Naive thymus-derived CD4-positive, alpha-beta T cell (primary cell): ENCODE measurements at regions of chr9 and their contacts with region 1.

Region 1: GRCh38 chr9:74952281-74953151 is at the start of gene C9orf40:
- DNase-seq: peak; percentile 80 to 92 (median 88)
- ATAC-seq: peak; percentile 93
- H3K4me3 ChIP-seq: peak within 1 kb of the TSS; percentile 89
- H3K4me3 Mint-ChIP-seq: peak within 1 kb of the TSS; percentile 87 to 99 (median 97)
- H3K27ac ChIP-seq: peak within 1 kb of the TSS; percentile 86
- H3K27ac Mint-ChIP-seq: peak within 1 kb of the TSS; percentile 89 to 97 (median 95)
- H3K4me1 ChIP-seq: peaks cover 0 to 7% of the 10 kb centered on the region in 2 donors
- H3K4me1 Mint-ChIP-seq: peaks cover 0 to 46% (median 30%) of the 10 kb centered on the region in 7 donors
- H3K27me3 ChIP-seq: no peaks in the 10 kb centered on the region
- H3K27me3 Mint-ChIP-seq: no peaks in the 10 kb centered on the region
- total RNA-seq, gene C9orf40: 1.8 to 13.6 (median 6.6) TPM

Region 2: GRCh38 chr9:73149371-73150067 is 1803.0 kb before region 1 on chr9:
- CTCF ChIA-PET with region 1: no interaction called
- POLR2A ChIA-PET with region 1: no interaction called
- intact Hi-C with region 1: loop called in 1 of 2 experiments (anchors 10 kb)
- DNase-seq: peak in 1 of 9 donors; percentile 57
- ATAC-seq: peak; percentile 49
- H3K4me3 ChIP-seq: peak overlapping the region; percentile 17
- H3K4me3 Mint-ChIP-seq: peak overlapping the region in 9 of 10 donors; percentile 8 to 79 (median 60)
- H3K27ac ChIP-seq: peak overlapping the region; percentile 32
- H3K27ac Mint-ChIP-seq: peak overlapping the region; percentile 71 to 96 (median 78)
- H3K4me1 ChIP-seq: peaks cover 28 to 32% of the 10 kb centered on the region in 2 donors
- H3K4me1 Mint-ChIP-seq: peaks cover 34 to 80% (median 54%) of the 10 kb centered on the region in 7 donors
- H3K27me3 ChIP-seq: no peaks in the 10 kb centered on the region
- H3K27me3 Mint-ChIP-seq: peaks cover 0 to 2% (median 0%) of the 10 kb centered on the region in 5 donors

Region 3: DNA sequence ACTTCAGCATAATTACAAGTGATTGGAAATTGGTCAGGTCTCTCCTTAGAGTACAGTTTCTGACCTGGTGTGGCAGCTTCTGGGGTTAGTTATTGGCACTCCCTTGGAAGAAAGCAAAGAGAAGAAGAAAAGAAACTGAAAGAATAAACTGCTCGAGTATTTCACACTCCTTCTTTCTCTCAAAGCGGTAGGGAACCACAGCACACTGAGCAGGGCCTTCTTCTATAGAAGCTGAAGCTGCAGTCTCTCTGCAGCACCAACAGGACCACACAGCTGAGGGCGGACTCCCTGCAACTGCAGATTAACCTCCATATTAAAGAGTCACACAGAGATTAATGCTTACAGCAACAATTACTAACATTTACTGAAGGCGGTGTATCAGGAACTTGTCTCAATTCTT is 216.8 kb before region 1 on chr9:
- CTCF ChIA-PET with region 1: no interaction called
- POLR2A ChIA-PET with region 1: no interaction called
- intact Hi-C with region 1: no loop called
- DNase-seq: no peak
- ATAC-seq: no peak
- H3K4me3 ChIP-seq: no peak overlapping the region
- H3K4me3 Mint-ChIP-seq: peak overlapping the region in 2 of 10 donors; percentile 41 to 72
- H3K27ac ChIP-seq: no peak overlapping the region
- H3K27ac Mint-ChIP-seq: no peak overlapping the region
- H3K4me1 ChIP-seq: no peaks in the 10 kb centered on the region
- H3K4me1 Mint-ChIP-seq: peaks cover 0 to 10% (median 0%) of the 10 kb centered on the region in 7 donors
- H3K27me3 ChIP-seq: no peaks in the 10 kb centered on the region
- H3K27me3 Mint-ChIP-seq: peaks cover 5 to 24% (median 9%) of the 10 kb centered on the region in 5 donors

Region 4: DNA sequence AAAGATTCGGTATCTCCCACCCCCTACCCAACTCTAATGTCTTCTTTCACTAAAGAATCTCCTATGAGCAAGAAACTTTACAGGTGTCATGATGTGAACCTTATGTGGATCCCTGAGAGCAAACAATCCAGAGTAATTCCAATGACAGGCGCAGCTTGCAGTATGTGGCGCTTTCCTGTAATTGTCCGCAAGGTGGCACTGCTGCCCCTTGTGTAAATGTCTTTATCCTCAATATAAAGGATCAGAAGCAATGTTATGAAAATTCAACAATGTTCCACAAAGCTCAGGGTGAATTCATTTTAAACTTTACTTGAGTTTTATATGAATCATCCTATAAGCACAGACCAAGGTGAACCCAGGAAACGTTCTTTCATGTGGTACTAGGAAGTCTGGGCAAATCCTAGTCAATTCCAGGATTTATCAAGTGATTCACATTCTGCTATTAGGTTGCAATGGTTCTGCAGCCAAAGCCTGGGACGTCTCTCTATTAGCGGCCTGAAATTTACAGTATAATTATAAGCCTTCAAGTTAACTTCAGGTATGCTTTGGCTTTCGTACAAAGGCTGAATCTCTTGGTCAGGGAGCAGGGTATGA is 178.5 kb before region 1 on chr9:
- CTCF ChIA-PET with region 1: interaction called, 4 read pairs
- POLR2A ChIA-PET with region 1: interaction called, 4 read pairs
- intact Hi-C with region 1: loop called (anchors 1 to 2 kb)
- DNase-seq: peak; percentile 26 to 67 (median 56)
- ATAC-seq: peak; percentile 83
- H3K4me3 ChIP-seq: no peak overlapping the region
- H3K4me3 Mint-ChIP-seq: no peak overlapping the region
- H3K27ac ChIP-seq: no peak overlapping the region
- H3K27ac Mint-ChIP-seq: no peak overlapping the region
- H3K4me1 ChIP-seq: no peaks in the 10 kb centered on the region
- H3K4me1 Mint-ChIP-seq: peaks cover 0 to 5% (median 0%) of the 10 kb centered on the region in 7 donors
- H3K27me3 ChIP-seq: no peaks in the 10 kb centered on the region
- H3K27me3 Mint-ChIP-seq: peaks cover 5 to 20% (median 18%) of the 10 kb centered on the region in 5 donors

Region 5: DNA sequence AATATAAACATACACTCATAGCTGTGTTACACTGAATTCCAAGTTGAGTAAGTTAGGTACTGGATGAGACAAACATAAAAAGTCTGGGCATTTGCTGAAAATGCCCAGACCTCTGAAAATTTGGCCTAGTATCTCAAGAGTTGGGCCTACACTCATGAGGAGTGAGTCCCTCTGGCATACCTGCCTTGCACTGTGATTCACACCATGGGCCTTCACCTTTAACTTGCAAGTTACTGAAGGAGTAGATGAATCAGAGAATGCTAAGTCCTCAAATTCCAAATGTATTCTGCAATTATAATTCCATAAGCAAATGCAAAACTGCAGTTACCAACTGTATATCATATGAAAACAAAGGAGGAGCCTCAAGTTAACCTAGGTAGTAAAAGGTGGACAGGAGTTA is 32.5 kb after region 1 on chr9:
- CTCF ChIA-PET with region 1: interaction called, 6 read pairs
- POLR2A ChIA-PET with region 1: no interaction called
- intact Hi-C with region 1: loop called in 1 of 2 experiments (anchors 5 kb)
- DNase-seq: no peak
- ATAC-seq: no peak
- H3K4me3 ChIP-seq: no peak overlapping the region
- H3K4me3 Mint-ChIP-seq: no peak overlapping the region
- H3K27ac ChIP-seq: no peak overlapping the region
- H3K27ac Mint-ChIP-seq: peak overlapping the region in 1 of 9 donors; percentile 78
- H3K4me1 ChIP-seq: no peaks in the 10 kb centered on the region
- H3K4me1 Mint-ChIP-seq: peaks cover 0 to 7% (median 0%) of the 10 kb centered on the region in 7 donors
- H3K27me3 ChIP-seq: no peaks in the 10 kb centered on the region
- H3K27me3 Mint-ChIP-seq: no peaks in the 10 kb centered on the region

Region 6: GRCh38 chr9:75071530-75072124 is 119.1 kb after region 1 on chr9:
- CTCF ChIA-PET with region 1: interaction called, 3 read pairs
- POLR2A ChIA-PET with region 1: no interaction called
- intact Hi-C with region 1: loop called in 1 of 2 experiments (anchors 2 kb)
- DNase-seq: peak in 7 of 9 donors; percentile 20 to 75 (median 35)
- ATAC-seq: peak; percentile 79
- H3K4me3 ChIP-seq: no peak overlapping the region
- H3K4me3 Mint-ChIP-seq: peak overlapping the region in 1 of 10 donors; percentile 13
- H3K27ac ChIP-seq: peak overlapping the region; percentile 25
- H3K27ac Mint-ChIP-seq: peak overlapping the region; percentile 26 to 96 (median 79)
- H3K4me1 ChIP-seq: peaks cover 8 to 10% of the 10 kb centered on the region in 2 donors
- H3K4me1 Mint-ChIP-seq: peaks cover 14 to 35% (median 21%) of the 10 kb centered on the region in 7 donors
- H3K27me3 ChIP-seq: no peaks in the 10 kb centered on the region
- H3K27me3 Mint-ChIP-seq: no peaks in the 10 kb centered on the region

Region 7: GRCh38 chr9:75148561-75148960 is 196.0 kb after region 1 on chr9:
- CTCF ChIA-PET with region 1: interaction called, 3 read pairs
- POLR2A ChIA-PET with region 1: no interaction called
- intact Hi-C with region 1: loop called (anchors 5 kb)
- DNase-seq: peak in 1 of 9 donors; percentile 32
- ATAC-seq: no peak
- H3K4me3 ChIP-seq: peak overlapping the region; percentile 5
- H3K4me3 Mint-ChIP-seq: peak overlapping the region in 9 of 10 donors; percentile 20 to 88 (median 82)
- H3K27ac ChIP-seq: peak overlapping the region; percentile 47
- H3K27ac Mint-ChIP-seq: peak overlapping the region; percentile 81 to 97 (median 86)
- H3K4me1 ChIP-seq: peaks cover 66 to 69% of the 10 kb centered on the region in 2 donors
- H3K4me1 Mint-ChIP-seq: peaks cover 47 to 96% (median 86%) of the 10 kb centered on the region in 7 donors
- H3K27me3 ChIP-seq: no peaks in the 10 kb centered on the region
- H3K27me3 Mint-ChIP-seq: no peaks in the 10 kb centered on the region

Region 8: DNA sequence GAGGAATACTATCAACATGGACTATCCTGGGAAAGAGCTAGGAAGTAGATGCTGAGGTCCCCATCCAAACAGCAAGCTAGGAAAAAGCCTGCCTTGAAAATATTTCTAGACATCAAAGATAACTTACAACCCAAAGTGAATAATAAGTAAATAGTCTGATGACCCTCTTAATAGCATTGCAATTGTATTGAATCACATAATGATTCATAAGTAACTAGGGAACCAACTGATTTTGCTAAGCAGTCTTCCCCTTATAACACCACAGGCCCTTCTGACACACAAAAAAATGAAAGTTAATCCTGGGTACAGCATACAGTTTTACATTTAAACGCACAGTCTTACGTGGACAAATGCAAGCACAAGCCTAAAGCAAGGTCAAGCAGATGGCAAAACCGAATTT is 1242.4 kb after region 1 on chr9:
- CTCF ChIA-PET with region 1: no interaction called
- POLR2A ChIA-PET with region 1: no interaction called
- intact Hi-C with region 1: no loop called
- DNase-seq: no peak
- ATAC-seq: no peak
- H3K4me3 ChIP-seq: no peak overlapping the region
- H3K4me3 Mint-ChIP-seq: no peak overlapping the region
- H3K27ac ChIP-seq: no peak overlapping the region
- H3K27ac Mint-ChIP-seq: no peak overlapping the region
- H3K4me1 ChIP-seq: no peaks in the 10 kb centered on the region
- H3K4me1 Mint-ChIP-seq: peaks cover 0 to 6% (median 0%) of the 10 kb centered on the region in 7 donors
- H3K27me3 ChIP-seq: no peaks in the 10 kb centered on the region
- H3K27me3 Mint-ChIP-seq: no peaks in the 10 kb centered on the region